ENCODE measurements at regions of chr16 and their contacts with region 1.

Region 1: GRCh38 chr16:4402439-4403132 is 13.8 kb downstream of the CORO7 start:
- DNase-seq: peak in 1 of 2 experiments; percentile 87
- H3K4me3 ChIP-seq: no peak overlapping the region
- H3K27ac ChIP-seq: no peak overlapping the region
- H3K4me1 ChIP-seq: peaks cover 4% of the 10 kb centered on the region; the same call in 1 of the 2 replicates
- H3K27me3 ChIP-seq: no peaks in the 10 kb centered on the region
- CTCF ChIP-seq: peak; percentile 93

Region 2: DNA sequence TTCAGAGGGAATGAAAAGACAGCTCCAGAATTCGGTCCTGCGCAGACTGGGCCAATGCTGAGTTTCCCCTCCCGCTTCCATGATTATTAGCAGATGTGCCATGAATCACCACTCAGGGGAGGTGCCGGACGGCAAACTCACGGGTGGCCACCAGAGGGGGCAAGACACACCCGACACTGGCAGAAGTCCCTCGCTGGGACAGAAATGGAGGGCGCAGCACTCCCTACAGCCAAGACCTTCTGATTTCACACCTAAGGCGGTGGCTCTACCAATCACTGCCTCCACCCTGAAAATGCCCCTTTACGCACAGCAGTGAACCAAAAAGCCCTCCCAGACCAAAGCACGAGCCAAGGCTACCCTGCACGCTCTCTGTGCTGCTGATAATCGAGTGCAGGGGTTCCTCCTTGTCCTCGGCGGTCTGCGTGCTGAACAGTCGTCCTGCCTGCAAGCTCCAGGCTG is 712.1 kb before region 1 on chr16:
- CTCF ChIA-PET with region 1: no interaction called
- POLR2A ChIA-PET with region 1: no interaction called
- intact Hi-C with region 1: loop called (anchors 5 kb)
- DNase-seq: peak; percentile 54 to 86
- H3K4me3 ChIP-seq: no peak overlapping the region
- H3K27ac ChIP-seq: no peak overlapping the region
- H3K4me1 ChIP-seq: no peaks in the 10 kb centered on the region
- H3K27me3 ChIP-seq: no peaks in the 10 kb centered on the region
- CTCF ChIP-seq: peak; percentile 84

Region 3: GRCh38 chr16:3952737-3953131 is 449.9 kb before region 1 on chr16:
- CTCF ChIA-PET with region 1: no interaction called
- POLR2A ChIA-PET with region 1: interaction called, 16 read pairs
- intact Hi-C with region 1: no loop called
- DNase-seq: no peak
- H3K4me3 ChIP-seq: no peak overlapping the region
- H3K27ac ChIP-seq: no peak overlapping the region
- H3K4me1 ChIP-seq: no peaks in the 10 kb centered on the region
- H3K27me3 ChIP-seq: peaks cover 11% of the 10 kb centered on the region; the same call in 1 of the 2 replicates
- CTCF ChIP-seq: no peak

Region 4: DNA sequence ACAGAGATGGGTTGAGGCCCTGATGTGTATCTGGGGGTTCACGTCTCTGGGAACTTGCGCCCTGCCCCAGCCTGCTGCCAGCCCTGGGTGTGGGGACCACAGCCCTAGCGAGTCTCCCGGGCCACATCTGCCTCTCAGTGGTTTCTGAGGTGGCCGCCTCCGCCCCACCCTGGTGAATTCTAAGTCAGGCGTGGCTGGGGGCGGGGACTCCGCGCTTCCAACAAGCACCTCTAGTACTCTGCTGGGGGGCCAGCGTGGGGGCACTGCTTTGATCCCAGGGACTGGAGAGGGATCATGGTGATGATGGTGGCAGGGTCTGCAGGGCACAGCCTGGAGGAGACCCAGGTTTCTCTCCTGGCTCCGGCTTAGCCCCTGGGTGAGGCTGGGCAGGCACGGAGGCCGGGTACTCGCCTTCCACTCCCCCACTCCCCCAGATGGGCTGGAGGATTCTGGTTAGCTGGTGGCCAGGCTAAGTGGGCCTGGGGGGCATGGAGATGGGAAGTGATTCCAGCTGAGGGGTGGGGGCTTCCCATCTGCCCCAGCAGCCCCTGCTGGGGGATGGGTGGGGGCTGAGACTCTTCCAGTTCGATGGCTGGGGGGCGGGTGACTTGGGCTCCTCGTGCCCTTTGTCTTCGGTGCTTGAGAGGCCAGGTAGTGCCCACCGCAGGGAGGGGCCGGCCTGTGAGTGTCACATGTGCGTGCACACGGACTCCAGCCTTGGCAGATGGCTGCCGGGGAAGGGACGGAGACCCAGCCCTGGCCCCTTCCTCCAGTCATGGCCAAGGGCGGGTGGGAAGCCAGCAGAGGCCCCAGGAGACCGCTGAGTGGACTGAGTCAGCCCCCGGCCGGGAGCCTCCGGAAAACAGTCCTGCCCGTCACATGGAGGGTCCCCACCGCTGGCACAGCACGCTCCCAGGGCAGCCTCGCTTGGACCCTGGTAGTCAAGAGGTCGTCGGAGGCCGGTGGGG is 82.8 kb before region 1 on chr16:
- CTCF ChIA-PET with region 1: no interaction called
- POLR2A ChIA-PET with region 1: no interaction called
- intact Hi-C with region 1: no loop called
- DNase-seq: no peak
- H3K4me3 ChIP-seq: no peak overlapping the region
- H3K27ac ChIP-seq: no peak overlapping the region
- H3K4me1 ChIP-seq: peaks cover 17% of the 10 kb centered on the region
- H3K27me3 ChIP-seq: no peaks in the 10 kb centered on the region
- CTCF ChIP-seq: no peak

Region 5: DNA sequence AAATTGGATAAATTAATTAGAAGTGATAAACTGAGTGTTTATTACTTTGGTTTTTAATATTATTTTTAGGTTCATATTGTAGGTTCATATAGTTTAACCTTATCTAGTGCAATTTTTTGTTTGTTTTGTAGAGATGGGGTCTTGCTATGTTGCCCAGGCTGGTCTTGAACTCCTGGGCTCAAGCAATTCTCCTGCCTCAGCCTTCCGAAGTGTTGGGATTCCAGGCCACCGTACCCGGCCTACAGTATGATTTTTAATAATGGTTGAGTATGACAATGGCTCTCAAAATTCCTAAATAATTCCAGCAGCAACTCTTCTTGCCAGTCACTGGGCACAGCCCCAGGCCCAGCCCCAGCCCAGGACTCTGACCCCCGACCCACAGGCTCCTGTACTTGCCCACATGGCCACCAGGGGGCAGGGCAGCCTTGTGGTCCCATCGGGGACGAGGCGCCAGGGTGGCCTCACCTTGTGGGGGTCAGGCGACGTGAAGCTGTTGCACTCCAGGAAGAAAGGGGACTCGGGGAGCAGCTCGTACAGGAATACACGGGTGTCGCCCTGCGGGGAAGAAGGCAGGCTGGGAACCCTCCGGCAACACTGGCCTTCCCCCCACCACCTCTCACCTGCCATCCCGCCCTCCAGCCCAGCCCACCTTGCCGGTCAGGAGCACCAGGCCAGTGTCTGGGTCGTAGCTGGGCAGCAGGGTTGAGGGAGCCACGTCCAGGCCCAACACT is 43.6 kb before region 1 on chr16:
- CTCF ChIA-PET with region 1: interaction called, 15 read pairs
- POLR2A ChIA-PET with region 1: interaction called, 3 read pairs
- intact Hi-C with region 1: loop called (anchors 1 kb)
- DNase-seq: peak in 1 of 2 experiments; percentile 75
- H3K4me3 ChIP-seq: no peak overlapping the region
- H3K27ac ChIP-seq: no peak overlapping the region
- H3K4me1 ChIP-seq: peaks cover 4% of the 10 kb centered on the region
- H3K27me3 ChIP-seq: no peaks in the 10 kb centered on the region
- CTCF ChIP-seq: peak; percentile 99

Region 6: GRCh38 chr16:4461250-4462085 is 58.9 kb after region 1 on chr16:
- CTCF ChIA-PET with region 1: no interaction called
- POLR2A ChIA-PET with region 1: no interaction called
- intact Hi-C with region 1: no loop called
- DNase-seq: no peak
- H3K4me3 ChIP-seq: no peak overlapping the region
- H3K27ac ChIP-seq: no peak overlapping the region
- H3K4me1 ChIP-seq: peaks cover 30% of the 10 kb centered on the region
- H3K27me3 ChIP-seq: no peaks in the 10 kb centered on the region
- CTCF ChIP-seq: no peak

Measured in PC-9 (cell line).